IMR-90 (cell line): ENCODE measurements at regions of chr6 and their contacts with region 1.

Region 1: DNA sequence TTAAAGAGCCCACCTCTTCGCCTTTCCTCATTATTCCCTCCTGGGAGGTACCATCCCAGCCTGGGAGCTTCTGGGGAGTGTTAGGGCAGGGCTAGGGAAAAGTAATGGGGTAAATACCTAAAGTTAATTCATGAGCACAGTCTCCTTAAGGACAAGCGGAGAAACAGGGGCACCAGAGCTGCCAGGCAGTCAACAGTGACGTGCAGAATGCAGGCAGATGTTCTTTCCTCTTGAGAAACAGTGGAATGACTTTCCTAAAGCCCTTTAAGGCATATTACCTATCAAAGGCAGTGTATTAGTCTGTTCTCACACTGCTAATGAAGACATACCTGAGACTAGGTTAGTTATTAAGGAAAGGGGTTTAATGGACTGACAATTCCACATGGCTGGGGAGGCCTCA is 76.3 kb downstream of the RNF144B start:
- DNase-seq: no peak
- ATAC-seq: no peak
- H3K4me3 ChIP-seq: no peak overlapping the region
- H3K27ac ChIP-seq: no peak overlapping the region
- H3K4me1 ChIP-seq: no peaks in the 10 kb centered on the region
- H3K27me3 ChIP-seq: peaks cover 2% of the 10 kb centered on the region; the same call in 1 of the 2 replicates
- CTCF ChIP-seq: no peak
- POLR2A ChIP-seq: no peak
- RAD21 ChIP-seq: no peak

Region 2: GRCh38 chr6:18277237-18278006 is 186.0 kb before region 1 on chr6:
- CTCF ChIA-PET with region 1: no interaction called
- POLR2A ChIA-PET with region 1: no interaction called
- dilution Hi-C with region 1: no loop called
- in situ Hi-C with region 1: no loop called
- intact Hi-C with region 1: loop called (anchors 2 kb)
- DNase-seq: no peak
- ATAC-seq: peak; percentile 66
- H3K4me3 ChIP-seq: peak overlapping the region; percentile 62
- H3K27ac ChIP-seq: no peak overlapping the region
- H3K4me1 ChIP-seq: peaks cover 2% of the 10 kb centered on the region; the same call in 1 of the 2 replicates
- H3K27me3 ChIP-seq: peaks cover 31% of the 10 kb centered on the region
- CTCF ChIP-seq: no peak
- POLR2A ChIP-seq: no peak
- RAD21 ChIP-seq: no peak